AG04449 (cell line): ENCODE measurements at regions of chr6 and their contacts with region 1.

Region 1: DNA sequence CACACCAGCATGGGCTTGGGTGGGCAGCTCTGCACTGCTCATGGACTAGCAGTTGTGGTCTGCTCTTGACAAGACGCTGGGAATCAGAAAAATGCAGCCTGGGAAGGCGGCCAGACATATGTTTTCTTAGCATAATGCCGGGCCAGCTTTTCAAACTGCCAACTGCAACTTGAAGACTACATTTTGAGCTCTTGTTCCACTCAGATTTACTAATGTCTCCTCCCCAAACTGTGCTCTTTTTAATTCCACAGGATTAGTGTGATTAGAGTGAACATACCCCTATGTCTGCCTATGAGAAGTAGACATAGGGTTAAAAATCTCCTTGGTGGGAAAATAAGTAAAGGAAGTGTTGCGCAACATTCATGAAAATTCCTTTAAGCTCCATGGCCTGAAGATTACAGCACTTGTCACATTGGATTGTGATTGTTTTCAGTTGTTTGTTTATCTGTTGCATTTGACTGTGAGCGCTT is 5.3 kb upstream of the FNDC1 start:
- DNase-seq: no peak
- H3K4me3 ChIP-seq: no peak overlapping the region
- CTCF ChIP-seq: no peak

Region 2: GRCh38 chr6:159151266-159151855 is 12.6 kb before region 1 on chr6:
- CTCF ChIA-PET with region 1: interaction called, 12 read pairs
- POLR2A ChIA-PET with region 1: no interaction called
- DNase-seq: no peak
- H3K4me3 ChIP-seq: no peak overlapping the region
- CTCF ChIP-seq: peak; percentile 66